ENCODE measurements at regions of chr20 and their contacts with region 1.

Region 1: GRCh38 chr20:44866703-44867335 is 18.7 kb upstream of the YWHAB start:
- DNase-seq: no peak
- ATAC-seq: no peak
- H3K4me3 Mint-ChIP-seq: peak overlapping the region; percentile 50
- H3K27ac Mint-ChIP-seq: no peak overlapping the region
- H3K4me1 Mint-ChIP-seq: peaks cover 17% of the 10 kb centered on the region
- H3K27me3 Mint-ChIP-seq: peaks cover 25% of the 10 kb centered on the region

Region 2: DNA sequence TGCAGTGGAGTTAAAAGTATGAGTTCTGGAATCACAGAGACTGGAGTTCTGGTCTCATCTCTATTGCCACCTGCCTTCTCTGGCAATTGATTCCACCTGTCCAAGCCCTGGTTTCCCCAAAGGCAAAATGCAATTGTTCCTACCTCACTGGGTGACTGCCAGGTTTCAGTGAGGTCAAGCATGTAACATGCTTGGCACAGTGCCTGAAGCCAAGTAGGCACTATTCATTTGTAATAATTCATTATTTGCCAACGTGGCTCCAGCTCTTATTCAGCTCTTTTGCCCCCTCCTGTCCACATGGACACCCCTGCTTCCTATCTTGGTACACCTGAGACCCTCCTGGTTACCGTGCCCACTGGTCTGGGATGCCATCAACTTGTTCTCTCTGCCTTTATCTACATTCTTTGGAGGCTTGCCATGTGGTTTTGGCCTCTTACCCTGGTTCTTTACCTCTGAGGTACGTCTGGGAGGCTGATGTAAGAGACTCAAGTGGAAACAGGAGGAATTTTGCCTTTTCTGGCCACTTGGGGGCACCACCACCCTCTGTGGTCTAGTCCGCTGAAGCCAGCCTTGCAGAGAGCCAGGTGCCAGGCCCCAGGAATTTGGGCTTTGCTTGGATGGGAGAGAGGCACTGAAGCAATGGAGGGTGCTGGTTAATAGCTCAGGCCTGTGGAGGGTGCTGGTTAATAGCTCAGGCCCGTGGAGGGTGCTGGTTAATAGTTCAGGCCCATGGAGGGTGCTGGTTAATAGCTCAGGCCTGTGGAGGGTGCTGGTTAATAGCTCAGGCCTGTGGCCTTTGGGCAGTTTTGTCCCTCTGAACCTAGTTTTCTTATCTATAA is 119.4 kb before region 1 on chr20:
- CTCF ChIA-PET with region 1: interaction called, 21 read pairs
- DNase-seq: peak; percentile 74
- ATAC-seq: peak; percentile 48
- H3K4me3 Mint-ChIP-seq: no peak overlapping the region
- H3K27ac Mint-ChIP-seq: no peak overlapping the region
- H3K4me1 Mint-ChIP-seq: peaks cover 8% of the 10 kb centered on the region
- H3K27me3 Mint-ChIP-seq: peaks cover 42% of the 10 kb centered on the region

Measured in activated CD8-positive, alpha-beta memory T cell treated with anti-CD3 and anti-CD28 coated beads, Interleukin-2, amount 10 ng/mL, durations not matched to agents 7 days and 5 days (primary cell).